Body of pancreas (tissue), 4 donors: ENCODE measurements at regions of chr19 and their contacts with region 1.

Region 1: GRCh38 chr19:16386614-16387240 is 62.1 kb downstream of the KLF2 start:
- DNase-seq: peak; percentile 38 to 54 (median 43)
- ATAC-seq: peak; percentile 47
- H3K4me3 ChIP-seq: no peak overlapping the region
- H3K27ac ChIP-seq: no peak overlapping the region
- H3K4me1 ChIP-seq: no peaks in the 10 kb centered on the region
- H3K27me3 ChIP-seq: no peaks in the 10 kb centered on the region
- CTCF ChIP-seq: peak; percentile 33 to 61 (median 53)
- POLR2A ChIP-seq: no peak

Region 2: GRCh38 chr19:16051254-16052025 is 335.3 kb before region 1 on chr19:
- intact Hi-C with region 1: no loop called
- DNase-seq: no peak
- ATAC-seq: no peak
- H3K4me3 ChIP-seq: no peak overlapping the region
- H3K27ac ChIP-seq: no peak overlapping the region
- H3K4me1 ChIP-seq: no peaks in the 10 kb centered on the region
- H3K27me3 ChIP-seq: no peaks in the 10 kb centered on the region
- CTCF ChIP-seq: no peak
- POLR2A ChIP-seq: no peak

Region 3: DNA sequence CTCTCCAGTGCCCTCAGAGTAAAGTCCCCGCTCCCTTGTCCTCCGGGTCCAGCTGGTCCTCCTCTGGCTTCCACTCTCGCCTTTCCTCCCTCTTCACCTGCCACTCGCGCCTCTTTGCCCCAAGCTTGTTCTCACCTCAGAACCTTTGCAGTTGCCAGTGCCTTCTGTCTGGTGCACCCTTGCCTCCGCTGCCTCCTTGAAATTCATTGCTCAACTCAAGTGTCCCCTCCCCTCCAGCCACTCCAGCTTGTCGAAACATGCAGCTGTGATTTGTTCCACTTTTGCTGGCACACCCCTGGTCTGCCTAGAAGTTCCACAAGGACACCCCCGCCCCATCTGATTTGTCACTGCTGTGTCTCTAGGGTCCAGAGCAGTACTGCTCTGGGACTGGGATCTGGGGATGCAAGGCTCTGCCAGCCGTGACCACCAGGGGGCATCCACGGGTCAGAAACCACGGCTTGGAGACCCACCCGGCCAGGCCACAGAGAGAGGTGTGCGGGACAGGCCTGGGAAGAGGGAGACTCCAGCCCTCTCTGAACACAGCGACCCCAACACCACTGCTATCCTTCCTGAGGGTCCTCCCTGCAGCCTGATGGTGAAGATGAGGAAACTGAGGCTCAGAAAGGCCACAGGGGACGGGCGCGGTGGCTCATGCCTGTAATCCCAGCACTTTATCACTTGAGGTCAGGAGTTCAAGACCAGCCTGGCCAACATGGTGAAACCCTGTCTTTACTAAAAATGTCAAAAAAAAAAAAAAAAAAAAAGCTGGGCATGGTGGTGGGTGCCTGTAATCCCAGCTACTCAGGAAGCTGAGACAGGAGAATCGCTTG is 139.2 kb before region 1 on chr19:
- intact Hi-C with region 1: loop called (anchors 5 kb)
- DNase-seq: peak; percentile 83 to 89 (median 85)
- ATAC-seq: peak; percentile 93
- H3K4me3 ChIP-seq: no peak overlapping the region
- H3K27ac ChIP-seq: no peak overlapping the region
- H3K4me1 ChIP-seq: no peaks in the 10 kb centered on the region
- H3K27me3 ChIP-seq: no peaks in the 10 kb centered on the region
- CTCF ChIP-seq: peak; percentile 69 to 94 (median 91)
- POLR2A ChIP-seq: no peak